H1 (cell line): ENCODE measurements at regions of chrX and their contacts with region 1.

Region 1: GRCh38 chrX:2801223-2801622 is 27.5 kb upstream of the GYG2 start:
- DNase-seq: no peak
- H3K4me3 ChIP-seq: peak overlapping the region; percentile 1 to 57 (median 22); a peak in 6 of 8 replicates
- H3K27ac ChIP-seq: peak overlapping the region; percentile 89
- H3K4me1 ChIP-seq: peaks cover 0 to 13% (median 7%) of the 10 kb centered on the region in 4 experiments; a peak in 4 of 7 replicates
- H3K27me3 ChIP-seq: no peaks in the 10 kb centered on the region
- CTCF ChIP-seq: no peak
- EP300 ChIP-seq: no peak
- POLR2A ChIP-seq: peak; percentile 6 to 20; a peak in 1 of 3 replicates
- RAD21 ChIP-seq: no peak

Region 2: GRCh38 chrX:2811271-2811670 is 10.0 kb after region 1 on chrX:
- CTCF ChIA-PET with region 1: no interaction called
- POLR2A ChIA-PET with region 1: interaction called, 10 read pairs
- DNase-seq: no peak
- H3K4me3 ChIP-seq: no peak overlapping the region
- H3K27ac ChIP-seq: no peak overlapping the region
- H3K4me1 ChIP-seq: peaks cover 0 to 4% (median 0%) of the 10 kb centered on the region in 4 experiments; a peak in 3 of 7 replicates
- H3K27me3 ChIP-seq: no peaks in the 10 kb centered on the region
- CTCF ChIP-seq: no peak
- EP300 ChIP-seq: no peak
- POLR2A ChIP-seq: no peak
- RAD21 ChIP-seq: no peak

Region 3: GRCh38 chrX:2875798-2876399 is 74.7 kb after region 1 on chrX:
- CTCF ChIA-PET with region 1: no interaction called
- POLR2A ChIA-PET with region 1: no interaction called
- DNase-seq: no peak
- H3K4me3 ChIP-seq: no peak overlapping the region
- H3K27ac ChIP-seq: no peak overlapping the region
- H3K4me1 ChIP-seq: no peaks in the 10 kb centered on the region
- H3K27me3 ChIP-seq: no peaks in the 10 kb centered on the region
- CTCF ChIP-seq: peak in 2 of 3 experiments; percentile 25 to 27; a peak in 2 of 4 replicates
- EP300 ChIP-seq: no peak
- POLR2A ChIP-seq: no peak
- RAD21 ChIP-seq: peak; percentile 44 to 45